Activated CD4-positive, alpha-beta memory T cell treated with anti-CD3 and anti-CD28 coated beads, Interleukin-2, amount 10 ng/mL, durations not matched to agents 7 days and 5 days (primary cell): ENCODE measurements at regions of chrX and their contacts with region 1.

Region 1: DNA sequence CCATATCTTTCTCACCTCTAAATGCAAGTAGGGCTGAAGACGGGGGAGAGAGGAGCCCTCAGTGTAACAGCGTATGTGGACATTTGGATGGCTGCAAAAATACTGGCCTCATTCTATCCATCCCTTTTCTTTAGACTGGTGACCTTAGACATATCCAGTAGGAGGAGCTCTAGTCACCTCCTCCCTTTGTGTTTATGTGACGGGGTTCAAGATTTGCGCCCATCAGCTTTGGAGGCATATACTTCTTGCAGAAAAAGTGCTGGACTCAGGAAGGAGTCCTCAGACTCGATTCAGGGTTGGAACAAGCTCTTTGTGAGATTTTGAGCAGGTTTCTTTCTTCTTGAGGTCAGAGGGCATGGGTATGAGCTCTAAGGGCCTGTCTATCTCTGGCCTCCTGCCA is 86.2 kb downstream of the MAMLD1 start:
- DNase-seq: no peak
- H3K4me3 Mint-ChIP-seq: no peak overlapping the region
- H3K27ac Mint-ChIP-seq: no peak overlapping the region
- H3K4me1 Mint-ChIP-seq: peaks cover 30% of the 10 kb centered on the region
- H3K27me3 Mint-ChIP-seq: no peaks in the 10 kb centered on the region

Region 2: GRCh38 chrX:150478496-150479492 is 29.5 kb after region 1 on chrX:
- CTCF ChIA-PET with region 1: interaction called, 15 read pairs
- POLR2A ChIA-PET with region 1: interaction called, 6 read pairs
- DNase-seq: peak; percentile 49
- H3K4me3 Mint-ChIP-seq: peak overlapping the region; percentile 70
- H3K27ac Mint-ChIP-seq: peak overlapping the region; percentile 95
- H3K4me1 Mint-ChIP-seq: peaks cover 69% of the 10 kb centered on the region
- H3K27me3 Mint-ChIP-seq: no peaks in the 10 kb centered on the region

Region 3: GRCh38 chrX:150486011-150486410 is 36.7 kb after region 1 on chrX:
- CTCF ChIA-PET with region 1: interaction called, 15 read pairs
- POLR2A ChIA-PET with region 1: no interaction called
- DNase-seq: peak; percentile 57
- H3K4me3 Mint-ChIP-seq: no peak overlapping the region
- H3K27ac Mint-ChIP-seq: no peak overlapping the region
- H3K4me1 Mint-ChIP-seq: peaks cover 44% of the 10 kb centered on the region
- H3K27me3 Mint-ChIP-seq: no peaks in the 10 kb centered on the region